ENCODE measurements at regions of chr3 and their contacts with region 1.

Region 1: GRCh38 chr3:81743096-81744025 is 18.1 kb downstream of the GBE1 start:
- DNase-seq: peak; percentile 93
- H3K4me3 Mint-ChIP-seq: peak overlapping the region; percentile 48
- H3K27ac Mint-ChIP-seq: peak overlapping the region; percentile 94
- H3K4me1 Mint-ChIP-seq: peaks cover 34% of the 10 kb centered on the region
- H3K27me3 Mint-ChIP-seq: no peaks in the 10 kb centered on the region
- CTCF ChIP-seq: no peak

Region 2: GRCh38 chr3:81565041-81565440 is 178.3 kb before region 1 on chr3:
- CTCF ChIA-PET with region 1: no interaction called
- POLR2A ChIA-PET with region 1: no interaction called
- intact Hi-C with region 1: no loop called
- DNase-seq: no peak
- H3K4me3 Mint-ChIP-seq: no peak overlapping the region
- H3K27ac Mint-ChIP-seq: no peak overlapping the region
- H3K4me1 Mint-ChIP-seq: peaks cover 4% of the 10 kb centered on the region
- H3K27me3 Mint-ChIP-seq: no peaks in the 10 kb centered on the region
- CTCF ChIP-seq: no peak

Region 3: DNA sequence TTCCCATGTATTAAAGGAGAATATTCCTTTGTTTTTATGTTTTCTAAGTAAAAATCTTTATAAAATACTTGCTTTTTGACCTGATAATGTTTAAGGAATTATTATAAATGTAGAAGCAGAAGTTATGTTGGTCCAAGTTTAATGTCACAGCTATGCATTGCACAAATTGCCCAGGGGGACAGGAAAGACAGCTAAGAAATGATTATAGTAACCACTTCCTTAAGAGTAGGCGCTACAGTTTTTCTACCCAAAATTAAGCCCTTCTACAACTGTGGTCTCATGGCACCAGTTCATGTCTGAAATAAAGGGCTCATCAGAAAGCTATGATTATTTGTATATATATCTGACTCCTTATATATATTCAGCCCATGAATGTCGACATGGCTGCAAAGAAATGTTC is 158.3 kb before region 1 on chr3:
- CTCF ChIA-PET with region 1: no interaction called
- POLR2A ChIA-PET with region 1: no interaction called
- intact Hi-C with region 1: no loop called
- DNase-seq: no peak
- H3K4me3 Mint-ChIP-seq: no peak overlapping the region
- H3K27ac Mint-ChIP-seq: no peak overlapping the region
- H3K4me1 Mint-ChIP-seq: peaks cover 6% of the 10 kb centered on the region
- H3K27me3 Mint-ChIP-seq: no peaks in the 10 kb centered on the region
- CTCF ChIP-seq: no peak

Region 4: GRCh38 chr3:81723732-81724313 is 19.5 kb before region 1 on chr3:
- CTCF ChIA-PET with region 1: interaction called, 3 read pairs
- POLR2A ChIA-PET with region 1: interaction called, 10 read pairs
- intact Hi-C with region 1: loop called (anchors 2 kb)
- DNase-seq: peak; percentile 54
- H3K4me3 Mint-ChIP-seq: peak overlapping the region; percentile 62
- H3K27ac Mint-ChIP-seq: peak overlapping the region; percentile 69
- H3K4me1 Mint-ChIP-seq: peaks cover 46% of the 10 kb centered on the region
- H3K27me3 Mint-ChIP-seq: no peaks in the 10 kb centered on the region
- CTCF ChIP-seq: no peak

Region 5: DNA sequence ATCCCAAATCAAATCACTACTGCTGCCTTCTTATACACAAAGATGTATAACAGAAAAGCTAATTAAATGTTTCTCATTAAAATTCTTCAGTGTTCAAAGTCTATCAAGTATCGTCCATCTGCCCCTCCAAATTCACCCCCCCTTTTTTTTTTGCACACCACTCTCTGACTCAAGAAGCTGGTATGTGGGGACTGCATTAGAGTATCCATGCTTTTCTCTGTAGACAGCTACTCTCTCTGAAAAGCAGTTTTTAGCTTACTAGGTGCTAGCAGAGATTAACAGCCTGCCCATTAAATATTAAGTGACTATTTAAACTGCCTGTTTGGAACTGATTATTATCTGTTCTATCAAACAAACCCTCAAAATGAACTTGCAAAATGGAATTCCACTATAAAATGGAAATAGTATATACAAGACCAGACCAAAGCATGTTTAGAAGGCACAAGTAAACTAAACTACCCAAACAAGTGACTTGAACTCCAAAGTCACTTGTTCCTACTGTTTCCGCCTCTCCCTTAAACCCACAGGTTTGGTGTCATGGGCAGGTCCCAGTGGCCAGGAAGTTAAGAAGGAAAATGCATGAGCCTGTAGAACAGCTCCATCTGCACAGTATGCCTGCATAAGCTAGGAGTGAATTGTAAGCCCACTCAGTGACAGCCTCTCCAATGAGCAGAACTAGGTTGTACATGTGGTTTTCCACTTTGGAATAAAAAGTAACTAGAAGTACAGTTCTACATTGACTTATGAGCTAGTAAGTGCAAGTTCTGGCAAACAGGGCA is 14.4 kb before region 1 on chr3:
- CTCF ChIA-PET with region 1: interaction called, 3 read pairs
- POLR2A ChIA-PET with region 1: interaction called, 10 read pairs
- intact Hi-C with region 1: loop called (anchors 2 kb)
- DNase-seq: peak; percentile 54
- H3K4me3 Mint-ChIP-seq: peak overlapping the region; percentile 29
- H3K27ac Mint-ChIP-seq: peak overlapping the region; percentile 5
- H3K4me1 Mint-ChIP-seq: peaks cover 49% of the 10 kb centered on the region
- H3K27me3 Mint-ChIP-seq: no peaks in the 10 kb centered on the region
- CTCF ChIP-seq: no peak

Region 6: GRCh38 chr3:81753416-81754027 is 10.2 kb after region 1 on chr3:
- CTCF ChIA-PET with region 1: interaction called, 3 read pairs
- POLR2A ChIA-PET with region 1: interaction called, 10 read pairs
- intact Hi-C with region 1: no loop called
- DNase-seq: no peak
- H3K4me3 Mint-ChIP-seq: no peak overlapping the region
- H3K27ac Mint-ChIP-seq: no peak overlapping the region
- H3K4me1 Mint-ChIP-seq: peaks cover 42% of the 10 kb centered on the region
- H3K27me3 Mint-ChIP-seq: no peaks in the 10 kb centered on the region
- CTCF ChIP-seq: no peak

Region 7: GRCh38 chr3:81760924-81761903 is 17.9 kb after region 1 on chr3 and contains the start of gene GBE1:
- CTCF ChIA-PET with region 1: interaction called, 9 read pairs
- POLR2A ChIA-PET with region 1: interaction called, 40 read pairs
- intact Hi-C with region 1: loop called (anchors 1 kb)
- DNase-seq: peak; percentile 98
- H3K4me3 Mint-ChIP-seq: peak within 1 kb of the TSS; percentile 77
- H3K27ac Mint-ChIP-seq: peak within 1 kb of the TSS; percentile 94
- H3K4me1 Mint-ChIP-seq: peaks cover 56% of the 10 kb centered on the region
- H3K27me3 Mint-ChIP-seq: no peaks in the 10 kb centered on the region
- CTCF ChIP-seq: peak; percentile 24
- total RNA-seq, gene GBE1: 41.8 and 58.1 TPM in 2 replicates

Measured in MCF 10A (cell line).